Activated naive CD4-positive, alpha-beta T cell treated with anti-CD3 and anti-CD28 coated beads, Interleukin-2, amount 10 ng/mL, durations not matched to agents 7 days and 5 days (primary cell): ENCODE measurements at regions of chr1 and their contacts with region 1.

Region 1: GRCh38 chr1:225772323-225772768 is 5.3 kb upstream of the SRP9 start:
- DNase-seq: peak; percentile 44
- H3K4me3 Mint-ChIP-seq: no peak overlapping the region
- H3K27ac Mint-ChIP-seq: no peak overlapping the region
- H3K4me1 Mint-ChIP-seq: no peaks in the 10 kb centered on the region
- H3K27me3 Mint-ChIP-seq: peaks cover 17% of the 10 kb centered on the region

Region 2: DNA sequence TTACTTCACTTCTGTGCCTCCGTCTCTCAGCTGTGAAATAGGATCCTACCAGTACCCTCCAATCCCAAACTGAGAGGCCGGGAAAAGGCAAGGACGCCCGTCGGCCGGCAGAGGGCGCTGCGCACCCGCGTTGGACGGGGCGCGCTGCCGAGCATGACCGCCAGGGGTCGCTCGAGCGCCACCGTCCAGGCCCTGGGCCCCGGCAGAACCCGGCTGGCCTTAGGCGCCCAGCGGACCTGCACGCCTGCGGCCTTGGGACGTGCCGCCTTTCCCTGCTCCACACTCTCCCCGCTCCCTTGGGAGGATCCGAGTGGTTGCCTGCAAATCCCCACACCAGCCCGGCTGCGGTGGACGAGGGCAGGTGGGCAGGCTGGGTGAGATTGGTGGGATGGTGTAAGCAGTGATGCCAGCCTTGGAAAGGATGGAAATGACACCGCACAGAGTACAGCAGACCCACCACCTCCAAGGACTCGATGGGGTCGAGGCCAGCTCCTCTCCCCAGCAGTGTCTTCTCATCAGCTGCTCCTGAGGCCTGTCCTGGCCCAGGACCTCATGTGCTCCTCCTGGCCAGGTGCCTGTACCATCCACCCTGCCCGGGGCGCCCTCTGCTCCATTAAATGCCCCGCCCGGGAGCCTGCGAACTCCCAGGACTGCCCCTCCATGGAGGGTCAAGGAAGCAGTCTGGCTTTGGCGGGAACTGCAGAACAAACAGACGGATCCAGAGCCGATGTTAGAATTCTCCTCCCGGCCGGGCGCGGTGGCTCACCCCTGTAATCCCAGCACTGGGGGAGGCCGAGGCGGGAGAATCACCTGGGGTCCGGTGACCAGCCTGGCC is 297.1 kb before region 1 on chr1:
- CTCF ChIA-PET with region 1: interaction called, 33 read pairs
- DNase-seq: peak; percentile 63
- H3K4me3 Mint-ChIP-seq: no peak overlapping the region
- H3K27ac Mint-ChIP-seq: peak overlapping the region; percentile 68
- H3K4me1 Mint-ChIP-seq: peaks cover 67% of the 10 kb centered on the region
- H3K27me3 Mint-ChIP-seq: peaks cover 9% of the 10 kb centered on the region

Region 3: GRCh38 chr1:226019572-226019971 is 247.2 kb after region 1 on chr1:
- CTCF ChIA-PET with region 1: no interaction called
- DNase-seq: no peak
- H3K4me3 Mint-ChIP-seq: no peak overlapping the region
- H3K27ac Mint-ChIP-seq: no peak overlapping the region
- H3K4me1 Mint-ChIP-seq: no peaks in the 10 kb centered on the region
- H3K27me3 Mint-ChIP-seq: peaks cover 7% of the 10 kb centered on the region